Heart right ventricle (tissue), 16 donors: ENCODE measurements at regions of chr7 and their contacts with region 1.

Region 1: DNA sequence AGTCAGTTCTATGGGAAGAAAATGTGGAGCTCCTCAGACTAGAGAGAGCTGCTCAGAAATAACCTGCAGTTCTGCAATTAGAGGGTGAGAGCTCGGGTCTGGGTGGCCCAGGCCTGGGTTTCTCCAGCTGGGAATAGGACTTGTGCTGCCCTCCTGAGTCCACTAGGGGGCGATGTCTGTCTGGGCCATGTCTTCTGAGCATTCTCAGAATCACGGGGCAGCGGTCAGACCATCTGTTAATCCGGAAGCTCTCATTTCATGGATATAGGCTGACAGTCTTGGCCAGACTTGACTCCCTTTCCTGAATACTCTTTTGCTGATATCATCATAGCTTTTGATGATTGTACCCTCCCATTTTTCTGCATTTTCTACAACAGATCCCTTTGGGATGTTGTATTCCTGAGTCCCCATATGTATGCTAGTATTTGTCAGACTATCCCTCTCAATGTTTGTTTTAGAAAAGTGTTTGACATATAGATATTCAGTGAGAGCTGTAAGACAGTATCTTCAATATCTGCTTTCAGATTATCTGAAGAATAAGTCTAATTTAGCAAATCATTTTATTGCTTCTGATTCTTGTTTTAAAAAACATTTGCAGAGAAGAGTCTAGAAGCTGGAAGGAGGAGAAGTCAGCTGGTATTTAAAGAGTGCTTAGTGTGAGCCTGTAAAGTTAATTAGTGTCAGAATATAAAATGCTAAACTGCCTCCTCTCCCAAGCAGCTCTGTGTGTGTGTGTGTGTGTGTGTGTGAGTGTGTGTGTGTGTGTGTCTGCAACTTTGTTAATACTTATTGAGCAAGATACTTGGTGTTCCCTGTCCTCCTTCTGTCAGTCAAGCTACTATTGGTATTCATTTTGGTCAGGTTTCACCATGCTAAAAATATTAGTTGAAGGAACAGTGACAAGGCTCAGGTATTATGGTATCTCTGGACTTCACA is 38.0 kb downstream of the STARD3NL start:
- DNase-seq: peak; percentile 68 to 80
- ATAC-seq: peak; percentile 80 to 92 (median 90)
- H3K4me3 ChIP-seq: no peak overlapping the region
- H3K27ac ChIP-seq: peak overlapping the region in 3 of 10 donors; percentile 27 to 64 (median 37)
- H3K4me1 ChIP-seq: peaks cover 6 to 28% (median 20%) of the 10 kb centered on the region in 9 donors
- H3K27me3 ChIP-seq: no peaks in the 10 kb centered on the region
- CTCF ChIP-seq: peak; percentile 89 to 98 (median 94)

Region 2: DNA sequence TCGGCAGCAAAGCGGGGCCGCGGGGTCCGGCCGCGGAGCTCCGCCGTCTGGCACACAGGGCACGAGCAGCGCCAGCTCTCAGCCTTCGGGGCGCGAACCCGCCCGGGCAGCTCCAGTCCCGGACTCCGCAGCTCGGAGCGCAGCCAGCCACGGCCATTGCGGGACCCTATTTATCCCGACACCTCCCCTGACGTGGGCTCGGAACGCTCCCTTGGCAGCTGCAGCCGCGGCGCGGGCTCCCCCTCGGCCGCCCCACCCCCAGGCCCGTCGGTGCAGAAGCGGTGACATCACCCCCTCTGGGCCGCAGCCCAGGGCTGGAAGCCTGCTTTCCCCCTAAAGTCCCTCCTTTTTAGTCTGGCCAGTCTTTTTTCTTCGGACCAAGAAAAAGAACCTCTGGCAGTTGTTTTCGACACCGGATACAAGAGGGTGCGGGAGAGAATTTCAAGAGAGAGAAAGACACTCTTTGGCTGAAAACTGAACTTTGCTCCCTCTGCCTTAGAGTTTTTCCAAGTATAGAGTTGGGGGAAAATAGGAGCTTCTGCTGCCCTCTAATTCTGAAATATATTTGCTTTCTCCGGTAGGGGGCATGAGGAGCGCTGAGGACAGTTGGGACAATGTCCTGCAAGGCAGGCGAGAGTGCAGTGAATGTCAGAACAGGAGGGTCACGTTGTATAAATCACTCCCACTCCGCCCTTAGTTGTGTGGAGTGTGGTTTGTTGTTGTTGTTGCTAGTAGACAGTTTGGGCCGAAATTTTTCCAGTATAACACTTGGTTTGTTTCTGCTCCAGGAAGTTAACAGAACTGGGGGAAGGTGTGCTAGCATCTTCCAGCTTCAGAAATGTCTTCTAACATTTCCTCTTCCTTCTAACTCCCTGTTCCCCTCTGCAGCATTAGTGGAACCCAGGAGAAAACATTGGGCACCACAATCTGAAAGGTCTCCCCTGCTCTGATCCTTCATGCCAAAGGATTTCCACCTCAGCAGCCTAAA is 299.0 kb before region 1 on chr7 and contains the start of gene SFRP4:
- intact Hi-C with region 1: loop called in 2 of 10 experiments (anchors 5 to 10 kb)
- DNase-seq: peak; percentile 61 to 67
- ATAC-seq: peak; percentile 57 to 83 (median 62)
- H3K4me3 ChIP-seq: peak within 1 kb of the TSS; percentile 31 to 62 (median 55)
- H3K27ac ChIP-seq: peak within 1 kb of the TSS; percentile 12 to 82 (median 69)
- H3K4me1 ChIP-seq: peaks cover 4 to 50% (median 32%) of the 10 kb centered on the region in 9 donors
- H3K27me3 ChIP-seq: peaks cover 0 to 69% (median 17%) of the 10 kb centered on the region in 7 donors
- CTCF ChIP-seq: peak; percentile 35 to 73 (median 68)
- total RNA-seq, gene SFRP4: 0.23 to 9.9 (median 3.4) TPM

Region 3: DNA sequence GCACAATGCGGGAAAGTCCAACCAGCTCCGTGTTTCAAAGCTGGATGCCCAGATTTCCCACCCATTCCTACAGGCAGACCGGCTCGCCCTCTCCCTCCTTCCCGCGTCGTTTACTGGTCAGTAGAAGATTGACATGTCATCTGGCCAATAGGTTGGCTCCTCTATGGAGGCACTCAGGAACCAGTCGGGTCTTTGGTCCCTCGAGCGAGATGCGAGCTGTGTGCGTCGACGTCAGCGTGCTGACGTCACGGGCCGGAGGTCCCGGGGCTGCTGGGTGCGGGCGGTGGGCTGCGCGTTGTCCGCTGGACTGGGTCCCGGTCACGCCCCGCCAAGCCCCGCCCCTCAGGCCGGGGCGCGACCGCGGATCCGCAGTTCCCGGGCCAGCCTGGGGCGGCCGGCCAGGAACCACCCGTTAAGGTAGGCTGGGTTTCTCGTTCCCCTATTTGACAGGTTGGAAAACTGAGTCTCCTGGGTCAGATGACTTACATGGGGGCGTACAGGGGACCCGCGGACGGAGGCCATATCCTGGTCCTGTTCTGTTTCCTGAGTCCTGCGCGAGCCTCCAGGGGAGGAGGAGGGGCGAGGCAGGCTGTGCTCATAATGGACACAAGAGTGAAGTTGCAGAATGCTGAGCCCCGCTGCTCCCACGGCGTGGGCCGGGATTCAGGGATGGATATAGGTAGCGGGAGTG is 37.9 kb before region 1 on chr7 and contains the start of gene STARD3NL:
- intact Hi-C with region 1: loop called in 5 of 10 experiments (anchors 2 to 5 kb)
- DNase-seq: peak; percentile 94 to 100
- ATAC-seq: peak; percentile 98 to 99 (median 99)
- H3K4me3 ChIP-seq: peak within 1 kb of the TSS; percentile 64 to 94 (median 81)
- H3K27ac ChIP-seq: peak within 1 kb of the TSS; percentile 66 to 96 (median 90)
- H3K4me1 ChIP-seq: peaks cover 2 to 52% (median 40%) of the 10 kb centered on the region in 9 donors
- H3K27me3 ChIP-seq: no peaks in the 10 kb centered on the region
- CTCF ChIP-seq: peak in 1 of 9 donors; percentile 18
- total RNA-seq, gene STARD3NL: 17.6 to 29.3 (median 24.2) TPM

Region 4: GRCh38 chr7:38318803-38319416 is 102.9 kb after region 1 on chr7:
- intact Hi-C with region 1: loop called in 5 of 10 experiments (anchors 5 to 10 kb)
- DNase-seq: peak in 1 of 2 donors; percentile 20
- ATAC-seq: peak in 7 of 8 donors; percentile 79 to 92 (median 86)
- H3K4me3 ChIP-seq: no peak overlapping the region
- H3K27ac ChIP-seq: peak overlapping the region in 3 of 10 donors; percentile 33 to 63 (median 61)
- H3K4me1 ChIP-seq: peaks cover 0 to 23% (median 0%) of the 10 kb centered on the region in 9 donors
- H3K27me3 ChIP-seq: no peaks in the 10 kb centered on the region
- CTCF ChIP-seq: peak; percentile 12 to 71 (median 61)

Region 5: DNA sequence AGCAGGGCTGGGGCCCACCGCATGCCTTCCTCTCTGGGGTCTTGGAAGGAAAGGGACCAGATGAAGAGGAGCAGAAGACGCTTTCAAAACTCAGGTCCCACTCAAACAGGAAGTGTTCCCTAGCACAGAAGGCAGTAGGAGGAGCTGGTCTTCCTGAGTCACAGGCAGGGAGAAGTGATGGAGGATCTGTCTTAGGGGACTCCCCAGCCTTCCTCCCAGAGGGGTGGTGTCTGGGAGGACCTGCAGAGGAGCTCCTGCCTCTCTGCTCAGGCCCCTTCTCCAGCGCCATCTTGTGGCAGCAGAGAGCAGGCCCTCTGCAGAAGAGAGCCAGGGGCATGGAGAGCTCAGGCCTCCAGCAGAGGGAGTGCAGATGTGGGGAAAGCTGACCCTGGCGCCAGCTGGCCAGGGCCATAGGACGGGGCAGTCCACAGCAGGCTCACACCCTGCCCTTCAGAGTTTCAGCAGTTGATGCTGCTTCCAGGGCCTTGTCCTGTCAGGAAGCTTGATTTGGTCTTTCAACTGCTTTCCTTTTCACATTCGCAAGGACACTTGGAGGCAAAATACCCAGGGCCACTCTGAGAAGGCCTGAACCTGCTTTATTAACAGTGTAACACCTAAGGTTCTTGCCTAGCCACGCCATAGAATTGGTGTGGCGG is 119.6 kb after region 1 on chr7:
- intact Hi-C with region 1: loop called in 1 of 10 experiments (anchors 10 kb)
- DNase-seq: peak; percentile 75 to 84
- ATAC-seq: peak; percentile 87 to 95 (median 92)
- H3K4me3 ChIP-seq: peak overlapping the region in 2 of 10 donors; percentile 23 to 43
- H3K27ac ChIP-seq: peak overlapping the region in 5 of 10 donors; percentile 17 to 87 (median 35)
- H3K4me1 ChIP-seq: peaks cover 0 to 39% (median 8%) of the 10 kb centered on the region in 9 donors
- H3K27me3 ChIP-seq: no peaks in the 10 kb centered on the region
- CTCF ChIP-seq: peak; percentile 76 to 99 (median 91)

Region 6: GRCh38 chr7:38369816-38370493 is 154.0 kb after region 1 on chr7:
- intact Hi-C with region 1: loop called in 1 of 10 experiments (anchors 5 kb)
- DNase-seq: peak; percentile 85 to 87
- ATAC-seq: peak; percentile 89 to 96 (median 94)
- H3K4me3 ChIP-seq: peak overlapping the region in 3 of 10 donors; percentile 10 to 27 (median 22)
- H3K27ac ChIP-seq: peak overlapping the region in 7 of 10 donors; percentile 13 to 66 (median 26)
- H3K4me1 ChIP-seq: peaks cover 0 to 38% (median 7%) of the 10 kb centered on the region in 9 donors
- H3K27me3 ChIP-seq: no peaks in the 10 kb centered on the region
- CTCF ChIP-seq: peak; percentile 48 to 89 (median 81)

Region 7: GRCh38 chr7:38846265-38846664 is 630.3 kb after region 1 on chr7:
- intact Hi-C with region 1: no loop called
- DNase-seq: no peak
- ATAC-seq: no peak
- H3K4me3 ChIP-seq: no peak overlapping the region
- H3K27ac ChIP-seq: no peak overlapping the region
- H3K4me1 ChIP-seq: peaks cover 0 to 5% (median 0%) of the 10 kb centered on the region in 9 donors
- H3K27me3 ChIP-seq: no peaks in the 10 kb centered on the region
- CTCF ChIP-seq: no peak